ENCODE measurements at regions of chr1 and their contacts with region 1.

Region 1: DNA sequence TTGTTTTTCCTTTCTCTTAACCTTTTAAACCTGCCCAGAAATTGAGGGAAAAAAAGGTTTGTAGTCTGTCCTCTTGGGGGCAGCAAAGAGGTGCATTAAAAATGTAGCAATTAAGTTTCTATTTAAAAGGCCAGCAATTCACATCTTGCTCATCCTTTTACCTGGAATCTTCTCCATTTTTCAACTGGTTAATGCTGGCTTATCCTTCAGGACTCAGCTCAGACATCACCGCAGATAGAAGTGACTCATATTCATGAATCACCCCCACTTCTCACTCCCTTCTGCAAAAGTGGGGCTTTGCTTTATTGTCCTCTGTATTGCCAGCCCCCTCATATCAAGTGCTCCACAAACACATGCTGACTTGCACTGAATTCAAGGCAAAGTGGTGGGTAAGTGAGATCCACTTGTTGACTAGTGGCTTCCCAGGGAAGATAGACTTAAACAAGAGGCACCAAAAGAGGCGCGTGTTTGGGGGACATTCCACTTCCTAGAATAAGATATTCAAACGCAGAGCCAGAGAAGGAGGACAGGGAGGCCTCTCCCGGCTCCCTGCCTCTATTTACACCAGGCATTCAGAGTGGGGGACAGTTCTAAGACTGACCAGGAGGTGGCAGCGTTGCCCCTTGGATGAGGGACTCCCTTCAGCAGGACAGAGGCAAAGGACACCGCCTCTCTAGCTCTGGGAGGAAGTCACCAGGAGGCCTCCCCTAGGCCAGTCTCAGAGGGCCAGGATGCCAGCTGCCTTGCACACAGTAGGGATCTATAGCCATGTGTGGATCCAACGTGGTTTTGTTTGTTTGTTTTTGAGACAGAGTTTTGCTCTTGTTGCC is 23.2 kb upstream of the ZNF648 start:
- DNase-seq: peak; percentile 91
- H3K4me3 Mint-ChIP-seq: no peak overlapping the region
- H3K27ac Mint-ChIP-seq: peak overlapping the region; percentile 10
- H3K4me1 Mint-ChIP-seq: peaks cover 42% of the 10 kb centered on the region
- H3K27me3 Mint-ChIP-seq: no peaks in the 10 kb centered on the region

Region 2: GRCh38 chr1:181479137-181479745 is 605.5 kb before region 1 on chr1:
- CTCF ChIA-PET with region 1: interaction called, 63 read pairs
- POLR2A ChIA-PET with region 1: no interaction called
- intact Hi-C with region 1: loop called (anchors 1 kb)
- DNase-seq: peak; percentile 35
- H3K4me3 Mint-ChIP-seq: no peak overlapping the region
- H3K27ac Mint-ChIP-seq: no peak overlapping the region
- H3K4me1 Mint-ChIP-seq: peaks cover 11% of the 10 kb centered on the region
- H3K27me3 Mint-ChIP-seq: peaks cover 24% of the 10 kb centered on the region

Region 3: DNA sequence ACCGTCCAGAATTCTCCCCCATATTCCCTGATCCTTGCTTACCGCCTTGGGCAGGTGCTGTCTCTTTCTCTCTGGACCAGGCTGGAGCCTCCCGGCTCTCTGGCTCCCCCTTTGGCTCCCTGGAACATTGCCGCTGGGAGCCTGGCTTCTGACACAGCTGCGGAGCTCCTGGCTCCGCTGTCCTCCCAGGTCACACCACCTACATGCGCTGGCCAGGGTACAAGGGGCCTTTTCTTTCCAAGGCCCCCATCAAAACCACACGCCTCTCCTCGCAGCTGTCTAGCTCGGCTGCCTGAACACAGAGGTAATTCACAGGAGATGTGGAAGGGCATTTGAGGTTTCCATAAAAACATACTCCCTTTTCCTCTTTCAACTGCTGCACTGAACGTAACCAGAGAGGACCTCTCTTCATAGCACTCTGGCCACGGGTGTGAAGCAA is 15.7 kb before region 1 on chr1:
- CTCF ChIA-PET with region 1: interaction called, 50 read pairs
- POLR2A ChIA-PET with region 1: interaction called, 3 read pairs
- intact Hi-C with region 1: no loop called
- DNase-seq: peak; percentile 63
- H3K4me3 Mint-ChIP-seq: no peak overlapping the region
- H3K27ac Mint-ChIP-seq: no peak overlapping the region
- H3K4me1 Mint-ChIP-seq: no peaks in the 10 kb centered on the region
- H3K27me3 Mint-ChIP-seq: peaks cover 15% of the 10 kb centered on the region

Region 4: DNA sequence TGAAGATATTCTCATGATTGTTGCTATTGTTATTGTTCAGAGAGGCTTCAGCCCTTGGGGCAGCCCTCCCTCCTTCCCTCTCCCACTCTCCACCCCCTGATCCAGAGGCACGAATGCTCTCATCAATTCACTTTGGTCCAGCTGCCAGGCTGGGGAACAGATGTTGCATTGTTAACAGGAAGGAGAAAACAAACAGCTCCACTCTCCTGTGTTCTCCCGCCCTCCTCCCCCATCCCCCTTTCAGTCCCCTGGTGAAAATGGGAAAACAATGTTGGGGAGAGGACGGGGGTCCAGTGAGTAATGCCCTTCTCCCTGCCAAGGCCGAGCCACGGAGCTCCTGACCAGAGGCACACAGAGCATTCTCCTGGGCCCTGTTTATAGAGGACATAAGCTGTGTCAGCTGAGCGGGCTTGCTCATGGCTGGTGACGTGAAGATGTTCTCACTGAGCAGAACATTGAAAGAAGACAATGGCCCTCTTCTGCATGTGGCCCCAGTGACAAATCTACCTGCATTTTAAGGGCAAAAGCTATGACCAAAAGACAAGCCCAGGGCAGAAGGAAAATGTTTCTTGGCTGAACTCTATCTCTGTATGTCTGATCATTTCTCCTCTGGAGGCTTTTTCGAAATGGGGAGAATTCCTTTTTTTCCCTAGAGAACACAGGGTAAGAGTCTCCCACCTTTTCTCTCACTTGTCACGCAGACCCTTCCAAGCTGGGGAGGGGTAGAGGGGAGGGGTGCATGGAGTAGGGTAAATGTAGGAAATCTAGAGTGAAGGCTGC is 195.2 kb after region 1 on chr1:
- CTCF ChIA-PET with region 1: no interaction called
- POLR2A ChIA-PET with region 1: no interaction called
- intact Hi-C with region 1: no loop called
- DNase-seq: no peak
- H3K4me3 Mint-ChIP-seq: no peak overlapping the region
- H3K27ac Mint-ChIP-seq: no peak overlapping the region
- H3K4me1 Mint-ChIP-seq: peaks cover 5% of the 10 kb centered on the region
- H3K27me3 Mint-ChIP-seq: no peaks in the 10 kb centered on the region

Region 5: DNA sequence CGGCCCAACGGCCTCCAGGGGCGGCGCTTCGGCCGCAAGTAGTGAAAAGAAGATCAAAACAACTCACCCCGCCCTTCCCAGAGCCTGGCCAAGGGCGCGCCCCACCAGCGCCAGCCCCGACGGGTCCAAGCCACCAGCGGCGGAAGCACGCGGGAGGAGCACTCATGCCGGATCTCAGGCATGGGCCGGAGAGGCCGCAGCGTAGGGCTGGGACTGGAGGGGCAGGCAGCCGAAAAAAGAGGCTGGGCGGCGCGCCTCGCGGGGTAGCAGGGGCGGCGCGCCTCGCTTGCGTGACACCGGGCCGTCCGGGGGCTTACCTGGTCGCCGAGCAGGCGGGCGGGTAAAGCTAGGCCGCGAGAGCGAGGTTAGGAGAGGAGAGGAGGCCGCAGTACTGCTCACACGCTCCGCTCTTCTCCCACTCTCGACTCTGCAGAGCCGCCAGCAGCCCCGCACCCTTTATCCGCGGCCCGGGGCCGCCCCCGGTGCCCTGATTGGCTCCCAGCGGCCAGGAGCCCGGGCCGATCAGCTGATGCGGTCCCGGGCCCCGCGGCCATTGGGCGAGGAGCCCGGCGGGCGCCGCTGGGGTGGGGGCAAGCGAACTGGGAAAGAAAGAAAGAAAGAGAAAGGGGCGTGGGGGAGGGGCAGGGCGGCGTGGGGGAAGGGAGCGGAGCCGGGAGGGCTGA is 306.8 kb after region 1 on chr1 and contains the start of gene GLUL:
- CTCF ChIA-PET with region 1: interaction called, 118 read pairs
- POLR2A ChIA-PET with region 1: no interaction called
- intact Hi-C with region 1: loop called (anchors 1 kb)
- DNase-seq: peak; percentile 82
- H3K4me3 Mint-ChIP-seq: peak within 1 kb of the TSS; percentile 93
- H3K27ac Mint-ChIP-seq: peak within 1 kb of the TSS; percentile 80
- H3K4me1 Mint-ChIP-seq: peaks cover 22% of the 10 kb centered on the region
- H3K27me3 Mint-ChIP-seq: peaks cover 7% of the 10 kb centered on the region
- total RNA-seq, gene GLUL: 61.3 to 63.9 TPM

Region 6: DNA sequence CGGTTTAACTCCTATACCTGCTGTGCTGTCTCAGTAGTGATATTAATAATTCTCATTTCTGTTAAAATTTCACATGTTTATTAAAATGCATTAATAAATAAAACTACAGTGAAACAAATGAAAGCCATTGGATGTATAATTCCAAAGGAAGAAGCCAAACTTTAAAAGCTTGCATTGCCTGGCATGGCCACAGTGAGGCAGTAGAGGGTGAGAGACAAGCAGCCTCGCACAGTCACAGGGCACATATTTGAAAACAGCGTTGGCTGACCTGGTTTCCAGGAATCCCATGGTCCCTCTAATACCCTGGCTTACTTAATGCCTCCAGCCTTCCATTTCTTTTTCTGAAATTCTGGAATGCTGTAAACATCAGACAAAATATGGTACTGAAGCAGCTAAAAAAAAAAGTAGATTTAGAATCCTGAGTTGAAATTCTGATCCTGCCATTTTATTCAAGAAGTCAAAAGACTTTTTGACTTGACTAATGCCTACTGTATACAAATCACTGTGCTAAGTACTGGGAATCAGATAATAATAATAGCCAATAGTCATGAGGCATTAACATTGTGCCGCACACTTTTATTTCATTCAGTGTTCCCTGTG is 511.0 kb after region 1 on chr1:
- CTCF ChIA-PET with region 1: interaction called, 10 read pairs
- POLR2A ChIA-PET with region 1: no interaction called
- intact Hi-C with region 1: loop called (anchors 5 kb)
- DNase-seq: peak; percentile 80
- H3K4me3 Mint-ChIP-seq: no peak overlapping the region
- H3K27ac Mint-ChIP-seq: no peak overlapping the region
- H3K4me1 Mint-ChIP-seq: peaks cover 10% of the 10 kb centered on the region
- H3K27me3 Mint-ChIP-seq: no peaks in the 10 kb centered on the region